ENCODE measurements at regions of chr11 and their contacts with region 1.

Region 1: GRCh38 chr11:66022401-66023185 is 3.7 kb downstream of the CATSPER1 start:
- DNase-seq: peak; percentile 88
- ATAC-seq: peak; percentile 97
- H3K4me3 Mint-ChIP-seq: peak overlapping the region; percentile 22
- H3K27ac Mint-ChIP-seq: no peak overlapping the region
- H3K4me1 Mint-ChIP-seq: peaks cover 16% of the 10 kb centered on the region
- H3K27me3 Mint-ChIP-seq: peaks cover 8% of the 10 kb centered on the region
- CTCF ChIP-seq: peak; percentile 96

Region 2: DNA sequence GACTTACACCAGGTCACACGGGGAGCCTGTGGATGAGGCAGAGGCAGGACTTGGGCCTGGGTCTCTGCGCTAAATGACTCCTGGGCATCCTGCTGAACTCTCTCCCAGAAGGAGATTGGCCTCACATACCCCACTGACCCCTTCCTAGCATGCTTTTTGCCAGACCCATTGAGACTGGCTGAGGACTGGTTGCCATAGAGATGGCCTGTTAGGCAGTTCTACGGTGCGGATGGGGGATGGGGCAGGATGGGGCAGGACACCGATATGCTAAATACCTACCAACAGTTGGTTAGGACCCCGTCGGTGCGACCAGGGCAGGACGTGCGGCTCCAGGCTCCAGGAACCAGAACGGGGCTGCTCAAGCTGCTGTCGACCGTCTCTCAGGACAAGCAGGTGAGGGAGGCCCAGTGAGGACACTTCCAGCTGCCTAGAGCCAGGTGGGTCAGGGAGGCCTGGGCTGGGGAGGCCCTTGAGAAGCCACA is 77.1 kb before region 1 on chr11 and contains the start of gene TSGA10IP:
- CTCF ChIA-PET with region 1: no interaction called
- POLR2A ChIA-PET with region 1: no interaction called
- intact Hi-C with region 1: no loop called
- DNase-seq: no peak
- ATAC-seq: no peak
- H3K4me3 Mint-ChIP-seq: no peak within 1 kb of the TSS
- H3K27ac Mint-ChIP-seq: no peak within 1 kb of the TSS
- H3K4me1 Mint-ChIP-seq: peaks cover 3% of the 10 kb centered on the region
- H3K27me3 Mint-ChIP-seq: no peaks in the 10 kb centered on the region
- CTCF ChIP-seq: no peak
- total RNA-seq, gene TSGA10IP: not detected

Region 3: GRCh38 chr11:65988791-65989592 is 33.6 kb before region 1 on chr11:
- CTCF ChIA-PET with region 1: interaction called, 14 read pairs
- POLR2A ChIA-PET with region 1: no interaction called
- intact Hi-C with region 1: no loop called
- DNase-seq: peak; percentile 98
- ATAC-seq: peak; percentile 99
- H3K4me3 Mint-ChIP-seq: no peak overlapping the region
- H3K27ac Mint-ChIP-seq: peak overlapping the region; percentile 53
- H3K4me1 Mint-ChIP-seq: peaks cover 5% of the 10 kb centered on the region
- H3K27me3 Mint-ChIP-seq: no peaks in the 10 kb centered on the region
- CTCF ChIP-seq: peak; percentile 99

Region 4: DNA sequence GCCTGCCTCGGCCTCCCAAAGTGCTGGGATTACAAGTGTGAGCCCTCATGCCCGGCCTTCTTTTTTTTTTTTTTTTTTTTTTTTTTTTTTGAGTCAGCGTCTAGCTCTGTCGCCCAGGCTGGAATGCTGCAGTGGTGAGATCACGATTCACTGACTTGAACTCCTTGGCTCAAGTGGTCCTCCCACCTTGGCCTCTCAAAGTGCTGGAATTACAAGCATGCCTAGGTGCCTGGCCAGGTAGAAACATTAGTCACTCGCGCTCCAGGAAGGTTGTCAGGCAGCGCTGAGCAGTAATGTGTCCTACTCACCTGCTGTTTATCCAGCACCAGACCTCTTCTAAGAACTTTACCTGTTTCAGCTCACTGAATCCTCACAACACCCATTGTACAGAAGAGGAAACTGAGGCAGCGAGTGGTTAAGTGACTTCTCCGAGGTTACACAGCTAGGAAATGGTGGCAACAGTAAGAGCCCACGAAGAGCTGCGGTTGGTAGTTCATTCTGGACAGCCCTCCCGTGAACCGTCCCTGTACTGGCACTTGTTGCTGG is 11.3 kb before region 1 on chr11:
- CTCF ChIA-PET with region 1: interaction called, 30 read pairs
- POLR2A ChIA-PET with region 1: interaction called, 5 read pairs
- intact Hi-C with region 1: no loop called
- DNase-seq: no peak
- ATAC-seq: no peak
- H3K4me3 Mint-ChIP-seq: no peak overlapping the region
- H3K27ac Mint-ChIP-seq: no peak overlapping the region
- H3K4me1 Mint-ChIP-seq: peaks cover 2% of the 10 kb centered on the region
- H3K27me3 Mint-ChIP-seq: peaks cover 17% of the 10 kb centered on the region
- CTCF ChIP-seq: no peak

Region 5: GRCh38 chr11:66035653-66036333 is 13.2 kb after region 1 on chr11:
- CTCF ChIA-PET with region 1: interaction called, 19 read pairs
- POLR2A ChIA-PET with region 1: interaction called, 5 read pairs
- intact Hi-C with region 1: no loop called
- DNase-seq: no peak
- ATAC-seq: no peak
- H3K4me3 Mint-ChIP-seq: no peak overlapping the region
- H3K27ac Mint-ChIP-seq: no peak overlapping the region
- H3K4me1 Mint-ChIP-seq: no peaks in the 10 kb centered on the region
- H3K27me3 Mint-ChIP-seq: peaks cover 5% of the 10 kb centered on the region
- CTCF ChIP-seq: no peak

Region 6: GRCh38 chr11:66045177-66045639 is 22.6 kb after region 1 on chr11:
- CTCF ChIA-PET with region 1: interaction called, 39 read pairs
- POLR2A ChIA-PET with region 1: interaction called, 5 read pairs
- intact Hi-C with region 1: no loop called
- DNase-seq: peak; percentile 88
- ATAC-seq: peak; percentile 93
- H3K4me3 Mint-ChIP-seq: peak overlapping the region; percentile 38
- H3K27ac Mint-ChIP-seq: peak overlapping the region; percentile 69
- H3K4me1 Mint-ChIP-seq: peaks cover 20% of the 10 kb centered on the region
- H3K27me3 Mint-ChIP-seq: peaks cover 7% of the 10 kb centered on the region
- CTCF ChIP-seq: peak; percentile 98

Region 7: DNA sequence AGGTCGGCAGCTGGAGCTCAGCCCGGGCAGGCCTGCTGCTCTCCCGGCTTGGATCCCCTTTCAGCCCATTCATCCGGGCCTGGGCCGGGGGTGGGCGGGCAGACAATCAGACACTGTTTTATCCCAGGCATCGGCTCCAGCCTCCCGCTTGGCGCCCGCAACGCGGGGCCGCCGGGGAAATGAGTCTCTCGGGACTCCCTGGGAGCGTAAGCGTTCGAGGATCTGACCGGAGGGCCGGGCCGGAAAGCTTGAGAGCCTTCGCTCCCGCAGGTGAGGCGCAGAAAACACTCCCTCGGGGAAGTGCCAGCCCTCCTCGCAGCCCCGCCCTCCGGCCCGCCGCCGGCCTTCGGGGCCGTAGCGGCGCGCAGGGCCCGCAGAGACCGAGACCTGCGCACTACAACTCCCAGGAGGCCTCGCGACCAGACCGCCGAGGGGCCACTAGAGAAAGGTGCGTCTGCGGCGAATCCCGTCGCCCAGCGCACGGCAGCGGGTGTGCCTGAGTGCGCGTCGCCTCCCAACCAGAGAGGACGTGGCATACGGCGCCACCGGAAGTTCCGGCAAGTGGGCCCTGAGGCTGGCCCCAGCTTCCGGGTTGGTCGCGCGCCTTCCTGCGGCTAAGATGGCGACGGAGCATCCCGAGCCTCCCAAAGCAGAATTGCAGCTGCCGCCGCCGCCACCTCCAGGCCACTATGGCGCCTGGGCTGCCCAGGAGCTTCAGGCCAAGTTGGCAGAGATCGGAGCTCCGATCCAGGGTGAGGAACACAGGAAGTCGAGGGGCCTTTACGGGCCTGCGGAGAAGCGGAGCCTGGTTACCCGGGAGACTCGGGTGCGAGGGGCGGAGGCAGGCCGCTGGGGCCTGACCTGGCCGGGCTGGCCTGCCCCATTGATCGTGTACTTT is 29.4 kb after region 1 on chr11 and contains the start of gene SF3B2:
- CTCF ChIA-PET with region 1: interaction called, 39 read pairs
- POLR2A ChIA-PET with region 1: no interaction called
- intact Hi-C with region 1: no loop called
- DNase-seq: peak; percentile 98
- ATAC-seq: peak; percentile 99
- H3K4me3 Mint-ChIP-seq: peak within 1 kb of the TSS; percentile 94
- H3K27ac Mint-ChIP-seq: peak within 1 kb of the TSS; percentile 92
- H3K4me1 Mint-ChIP-seq: peaks cover 34% of the 10 kb centered on the region
- H3K27me3 Mint-ChIP-seq: peaks cover 7% of the 10 kb centered on the region
- CTCF ChIP-seq: no peak
- total RNA-seq, gene SF3B2: 255 to 278 TPM

Measured in activated CD8-positive, alpha-beta T cell treated with anti-CD3 and anti-CD28 coated beads for 36 hours (primary cell).